ENCODE measurements at regions of chr5 and their contacts with region 1.

Region 1: GRCh38 chr5:8568858-8569257 is 699.9 kb downstream of the MTRR start:
- DNase-seq: no peak
- H3K4me3 Mint-ChIP-seq: no peak overlapping the region
- H3K27ac Mint-ChIP-seq: no peak overlapping the region
- H3K4me1 Mint-ChIP-seq: no peaks in the 10 kb centered on the region
- H3K27me3 Mint-ChIP-seq: no peaks in the 10 kb centered on the region
- CTCF ChIP-seq: no peak

Region 2: DNA sequence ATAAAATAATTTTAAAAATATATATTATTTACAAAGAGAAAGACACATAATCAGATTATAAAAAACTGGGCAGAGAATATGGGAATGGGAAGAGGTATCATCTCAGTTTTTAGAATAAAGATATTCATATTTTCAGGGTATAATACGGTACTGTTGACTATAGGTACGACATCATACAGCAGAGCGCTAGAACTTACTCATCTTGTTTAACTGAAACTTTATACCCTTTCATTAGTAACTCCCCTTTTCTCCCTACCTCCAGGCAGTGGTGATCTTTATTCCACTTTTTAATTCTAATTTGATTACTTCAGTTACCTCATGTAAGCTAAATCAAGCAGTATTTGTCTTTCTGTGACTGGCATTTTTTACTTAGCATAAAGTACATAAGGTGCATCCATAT is 42.2 kb after region 1 on chr5:
- CTCF ChIA-PET with region 1: no interaction called
- intact Hi-C with region 1: loop called (anchors 1 kb)
- DNase-seq: no peak
- H3K4me3 Mint-ChIP-seq: no peak overlapping the region
- H3K27ac Mint-ChIP-seq: no peak overlapping the region
- H3K4me1 Mint-ChIP-seq: no peaks in the 10 kb centered on the region
- H3K27me3 Mint-ChIP-seq: no peaks in the 10 kb centered on the region
- CTCF ChIP-seq: no peak

Measured in Calu3 (cell line).